ENCODE measurements at regions of chr2 and their contacts with region 1.

Region 1: DNA sequence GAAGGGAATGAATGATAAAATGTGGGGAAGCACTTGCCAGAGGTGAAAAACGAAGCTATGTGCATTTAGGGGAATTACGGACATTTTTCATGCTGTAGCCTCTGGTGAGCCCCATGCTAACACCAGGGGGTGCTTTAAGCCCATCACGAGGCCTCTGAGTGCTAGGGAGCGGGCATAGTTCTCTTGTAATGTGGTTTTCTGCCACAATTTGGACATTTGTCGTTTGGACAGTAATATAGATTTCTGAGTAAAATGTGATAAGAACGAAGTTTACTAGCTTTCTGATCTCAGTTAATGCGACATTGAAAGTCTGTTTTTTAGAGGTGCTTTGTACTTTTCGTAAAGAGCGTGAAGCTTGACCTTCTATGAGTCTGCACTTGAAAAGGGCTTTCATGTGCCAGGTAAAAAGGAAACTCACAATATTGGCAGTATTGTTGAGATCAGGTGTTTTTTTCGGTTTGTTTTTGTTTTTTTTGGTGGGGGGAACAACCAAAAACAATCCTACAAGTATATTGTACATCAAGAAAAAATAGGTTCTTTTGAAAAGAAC is 50.6 kb downstream of the TRAF3IP1 start:
- DNase-seq: peak; percentile 56
- ATAC-seq: peak; percentile 97
- H3K4me3 ChIP-seq: no peak overlapping the region
- H3K27ac ChIP-seq: no peak overlapping the region
- H3K4me1 ChIP-seq: no peaks in the 10 kb centered on the region
- H3K27me3 ChIP-seq: no peaks in the 10 kb centered on the region
- CTCF ChIP-seq: peak; percentile 88

Region 2: DNA sequence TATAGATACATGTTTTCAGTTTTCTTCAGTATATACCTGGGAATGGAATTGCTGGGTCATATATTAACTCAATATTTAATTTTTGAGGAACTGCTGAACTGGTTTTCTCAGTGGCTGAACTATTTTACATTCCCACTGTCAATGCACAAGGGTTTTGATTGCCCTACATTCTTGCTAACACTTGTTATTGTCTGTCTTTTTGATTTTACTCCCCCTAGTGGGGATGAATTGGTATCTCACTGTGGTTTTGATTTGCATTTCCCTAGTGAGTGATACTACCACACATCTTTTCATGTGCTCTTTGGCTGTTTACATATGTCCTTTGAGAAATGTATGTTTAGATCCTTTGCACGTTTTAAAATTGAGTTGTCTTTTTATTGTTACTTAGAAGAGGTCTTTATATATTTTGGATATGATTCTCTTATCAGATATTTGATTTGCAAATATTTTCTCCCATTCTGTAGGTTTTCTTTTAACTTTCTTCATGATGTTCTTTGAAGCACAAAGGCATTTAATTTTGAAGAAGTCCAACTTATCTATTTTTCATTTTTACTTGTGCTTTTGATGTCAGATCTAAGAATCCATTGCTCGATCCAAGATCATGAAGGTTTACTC is 92.0 kb after region 1 on chr2:
- CTCF ChIA-PET with region 1: no interaction called
- POLR2A ChIA-PET with region 1: no interaction called
- in situ Hi-C with region 1: no loop called
- intact Hi-C with region 1: loop called (anchors 2 kb)
- DNase-seq: no peak
- ATAC-seq: peak; percentile 55; the same call in 1 of the 2 replicates
- H3K4me3 ChIP-seq: no peak overlapping the region
- H3K27ac ChIP-seq: no peak overlapping the region
- H3K4me1 ChIP-seq: no peaks in the 10 kb centered on the region
- H3K27me3 ChIP-seq: no peaks in the 10 kb centered on the region
- CTCF ChIP-seq: peak; percentile 75; the same call in 1 of the 2 replicates

Region 3: GRCh38 chr2:238784671-238785527 is 414.0 kb after region 1 on chr2:
- CTCF ChIA-PET with region 1: no interaction called
- POLR2A ChIA-PET with region 1: no interaction called
- in situ Hi-C with region 1: no loop called
- intact Hi-C with region 1: loop called (anchors 5 kb)
- DNase-seq: peak; percentile 47
- ATAC-seq: peak; percentile 89
- H3K4me3 ChIP-seq: no peak overlapping the region
- H3K27ac ChIP-seq: peak overlapping the region; percentile 57; the same call in 1 of the 2 replicates
- H3K4me1 ChIP-seq: peaks cover 4% of the 10 kb centered on the region; the same call in 1 of the 2 replicates
- H3K27me3 ChIP-seq: no peaks in the 10 kb centered on the region
- CTCF ChIP-seq: peak; percentile 93

Measured in Panc1 (cell line).